Head of caudate nucleus (tissue), 42 donors: ENCODE measurements at regions of chr5 and their contacts with region 1.

Region 1: GRCh38 chr5:15794052-15794985 is 294.3 kb downstream of the FBXL7 start:
- DNase-seq: peak in 1 of 42 donors; percentile 53

Region 2: DNA sequence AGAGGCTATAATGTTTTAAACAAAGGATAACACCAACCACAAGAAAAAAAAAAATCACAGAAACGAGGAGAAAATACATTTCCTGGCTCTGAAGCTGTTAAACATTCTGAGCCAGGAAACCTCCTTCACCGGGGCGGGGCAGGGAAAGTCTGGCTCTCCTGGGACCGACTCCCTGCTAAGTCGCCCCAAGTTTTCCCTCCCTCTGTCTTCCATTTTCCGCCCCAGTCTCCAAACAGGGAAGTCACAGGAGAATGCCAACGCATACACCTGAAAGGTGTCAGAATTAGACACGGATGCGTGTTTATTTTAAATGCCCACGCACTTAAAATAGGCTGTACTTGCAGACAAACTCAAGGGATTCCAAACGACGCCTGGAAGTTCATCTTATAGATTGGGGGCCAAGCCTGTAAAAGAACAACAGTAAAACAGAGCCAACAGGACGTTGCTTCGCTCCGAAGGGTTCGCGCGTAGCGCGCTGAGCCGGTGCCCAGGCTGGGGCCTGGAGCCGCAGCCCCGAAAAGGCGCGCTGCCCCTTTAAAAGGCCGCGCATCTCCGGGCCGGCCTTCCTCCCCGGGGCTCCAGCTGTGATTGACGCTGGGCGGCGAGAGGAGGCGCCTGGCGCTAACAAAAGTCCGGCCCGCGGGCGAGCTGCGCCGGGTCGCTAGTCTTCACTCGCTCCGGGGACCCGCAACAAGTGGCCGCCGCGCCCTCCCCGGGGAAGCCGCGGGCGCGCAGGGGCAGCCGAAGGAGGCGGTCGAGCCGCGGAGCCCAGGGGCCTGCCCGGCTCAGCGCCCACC is 294.6 kb before region 1 on chr5 and contains the start of gene FBXL7:
- intact Hi-C with region 1: loop called (anchors 5 kb)
- DNase-seq: peak; percentile 57 to 93 (median 84)